Esophagus muscularis mucosa (tissue), 4 donors: ENCODE measurements at regions of chr5 and their contacts with region 1.

Region 1: GRCh38 chr5:161544350-161544765 is 2.2 kb downstream of the GABRB2 start:
- DNase-seq: no peak
- H3K4me3 ChIP-seq: no peak overlapping the region
- H3K27ac ChIP-seq: no peak overlapping the region
- H3K4me1 ChIP-seq: peaks cover 13 to 37% (median 32%) of the 10 kb centered on the region in 4 donors
- H3K27me3 ChIP-seq: peaks cover 0 to 72% (median 25%) of the 10 kb centered on the region in 4 donors
- CTCF ChIP-seq: peak; percentile 64 to 79 (median 67)
- EP300 ChIP-seq: no peak
- POLR2A ChIP-seq: no peak

Region 2: GRCh38 chr5:163347671-163348070 is 1803.3 kb after region 1 on chr5:
- intact Hi-C with region 1: loop called (anchors 10 kb)
- DNase-seq: no peak
- H3K4me3 ChIP-seq: no peak overlapping the region
- H3K27ac ChIP-seq: no peak overlapping the region
- H3K4me1 ChIP-seq: no peaks in the 10 kb centered on the region
- H3K27me3 ChIP-seq: no peaks in the 10 kb centered on the region
- CTCF ChIP-seq: peak; percentile 50 to 79 (median 67)
- EP300 ChIP-seq: no peak
- POLR2A ChIP-seq: no peak

Region 3: DNA sequence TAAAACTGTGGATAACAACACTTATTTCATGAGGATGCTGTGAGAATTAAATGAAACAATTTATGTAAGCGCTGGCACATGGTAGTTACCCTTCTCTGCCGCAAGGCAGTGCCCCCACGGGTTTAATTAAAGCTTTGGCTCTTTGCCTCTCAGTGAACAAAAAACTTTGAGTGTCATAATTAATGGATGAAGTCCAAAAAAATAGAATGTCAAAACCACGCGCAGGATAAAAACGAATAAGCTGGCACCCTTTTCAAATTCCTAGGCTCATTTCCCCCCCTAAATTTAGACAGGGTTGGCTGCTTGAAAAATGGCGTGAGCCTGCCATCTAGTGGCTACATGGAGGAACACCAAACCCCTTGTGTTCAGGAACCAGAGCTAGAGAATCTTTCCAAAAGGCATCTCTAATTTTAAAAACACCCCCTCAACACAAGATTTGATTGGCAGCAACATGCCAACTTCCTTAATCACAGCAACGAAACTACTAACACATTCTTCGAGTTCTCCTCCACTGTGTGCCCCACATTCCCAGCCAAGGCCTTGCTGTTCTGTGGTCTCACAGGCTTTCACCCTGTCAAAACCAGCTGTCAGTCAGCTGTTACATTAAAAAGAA is 1864.1 kb after region 1 on chr5:
- intact Hi-C with region 1: loop called (anchors 5 kb)
- DNase-seq: no peak
- H3K4me3 ChIP-seq: peak overlapping the region in 1 of 4 donors; percentile 13
- H3K27ac ChIP-seq: no peak overlapping the region
- H3K4me1 ChIP-seq: peaks cover 0 to 12% (median 6%) of the 10 kb centered on the region in 4 donors
- H3K27me3 ChIP-seq: no peaks in the 10 kb centered on the region
- CTCF ChIP-seq: peak; percentile 80 to 87 (median 81)
- EP300 ChIP-seq: no peak
- POLR2A ChIP-seq: no peak